ENCODE measurements at regions of chr2 and their contacts with region 1.

Region 1: DNA sequence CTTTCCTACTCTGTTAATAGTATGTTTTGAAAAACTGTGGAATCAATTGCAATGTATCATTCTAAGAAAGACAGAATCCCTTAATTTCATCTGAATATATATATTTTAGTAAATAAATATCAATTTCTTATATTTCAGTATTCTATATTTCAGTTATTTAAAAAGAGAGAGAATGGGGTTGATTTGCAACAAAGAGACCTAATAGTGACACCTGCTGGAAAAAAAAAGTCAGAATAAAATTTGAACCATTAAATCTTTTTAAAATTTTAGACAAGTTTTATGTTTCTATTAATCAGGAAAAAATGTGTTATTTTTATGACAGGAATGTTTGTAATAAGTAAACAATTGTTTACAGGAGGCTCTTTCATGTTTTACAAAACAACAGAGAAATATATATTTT is 20.7 kb upstream of the CCNT2 start:
- DNase-seq: no peak
- H3K4me3 Mint-ChIP-seq: no peak overlapping the region
- H3K27ac Mint-ChIP-seq: no peak overlapping the region
- H3K4me1 Mint-ChIP-seq: peaks cover 5% of the 10 kb centered on the region
- H3K27me3 Mint-ChIP-seq: no peaks in the 10 kb centered on the region
- CTCF ChIP-seq: peak; percentile 46

Region 2: DNA sequence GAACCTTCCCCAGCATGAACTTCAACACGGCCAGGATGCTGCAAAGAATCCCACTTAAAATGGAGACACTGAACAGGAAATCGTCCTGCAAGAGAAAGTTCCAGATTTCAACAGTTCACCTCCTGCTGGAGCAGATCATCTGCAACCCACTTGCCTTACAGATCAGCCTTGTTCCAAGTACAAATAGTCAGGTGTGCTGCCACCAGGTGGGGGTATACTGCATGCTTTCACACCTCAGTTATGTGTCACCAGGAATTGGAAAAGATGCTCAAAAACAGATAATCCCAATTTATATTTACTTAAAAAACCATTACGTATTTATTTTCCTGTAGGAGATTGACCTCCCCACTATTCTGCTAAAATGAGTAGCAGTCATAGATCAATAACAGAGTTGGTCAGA is 431.8 kb before region 1 on chr2:
- CTCF ChIA-PET with region 1: interaction called, 4 read pairs
- intact Hi-C with region 1: loop called (anchors 1 kb)
- DNase-seq: peak; percentile 74
- H3K4me3 Mint-ChIP-seq: no peak overlapping the region
- H3K27ac Mint-ChIP-seq: no peak overlapping the region
- H3K4me1 Mint-ChIP-seq: peaks cover 15% of the 10 kb centered on the region
- H3K27me3 Mint-ChIP-seq: no peaks in the 10 kb centered on the region
- CTCF ChIP-seq: no peak

Region 3: GRCh38 chr2:134657637-134658250 is 240.2 kb before region 1 on chr2:
- CTCF ChIA-PET with region 1: interaction called, 3 read pairs
- intact Hi-C with region 1: loop called (anchors 2 kb)
- DNase-seq: peak; percentile 63
- H3K4me3 Mint-ChIP-seq: no peak overlapping the region
- H3K27ac Mint-ChIP-seq: no peak overlapping the region
- H3K4me1 Mint-ChIP-seq: no peaks in the 10 kb centered on the region
- H3K27me3 Mint-ChIP-seq: no peaks in the 10 kb centered on the region
- CTCF ChIP-seq: peak; percentile 71

Region 4: DNA sequence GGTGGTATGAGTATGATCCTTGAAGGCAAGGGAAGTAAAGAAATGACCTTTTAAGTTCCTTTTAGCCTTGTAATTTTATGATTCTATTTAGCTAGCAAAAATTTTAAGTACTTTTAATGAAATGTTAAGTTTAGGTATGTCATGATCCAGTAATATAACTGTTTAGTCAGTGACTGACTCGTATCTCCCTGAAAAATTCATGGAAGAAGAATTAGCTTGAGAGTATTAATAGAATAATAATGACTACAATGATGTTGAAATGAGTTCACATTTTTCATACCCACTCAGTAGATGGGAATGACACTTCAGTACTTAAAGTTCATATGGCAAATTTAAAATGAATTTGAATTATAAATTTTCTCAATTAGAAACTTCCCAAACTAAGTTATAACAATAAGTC is 168.8 kb after region 1 on chr2:
- CTCF ChIA-PET with region 1: no interaction called
- intact Hi-C with region 1: no loop called
- DNase-seq: no peak
- H3K4me3 Mint-ChIP-seq: no peak overlapping the region
- H3K27ac Mint-ChIP-seq: no peak overlapping the region
- H3K4me1 Mint-ChIP-seq: no peaks in the 10 kb centered on the region
- H3K27me3 Mint-ChIP-seq: no peaks in the 10 kb centered on the region
- CTCF ChIP-seq: no peak